ENCODE measurements at regions of chr6 and their contacts with region 1.

Region 1: GRCh38 chr6:160766989-160767660 is 65.1 kb downstream of the PLG start:
- DNase-seq: peak; percentile 9
- H3K4me3 ChIP-seq: no peak overlapping the region
- H3K27ac ChIP-seq: no peak overlapping the region
- H3K4me1 ChIP-seq: no peaks in the 10 kb centered on the region
- H3K27me3 ChIP-seq: no peaks in the 10 kb centered on the region
- CTCF ChIP-seq: peak; percentile 60 to 62
- POLR2A ChIP-seq: no peak

Region 2: DNA sequence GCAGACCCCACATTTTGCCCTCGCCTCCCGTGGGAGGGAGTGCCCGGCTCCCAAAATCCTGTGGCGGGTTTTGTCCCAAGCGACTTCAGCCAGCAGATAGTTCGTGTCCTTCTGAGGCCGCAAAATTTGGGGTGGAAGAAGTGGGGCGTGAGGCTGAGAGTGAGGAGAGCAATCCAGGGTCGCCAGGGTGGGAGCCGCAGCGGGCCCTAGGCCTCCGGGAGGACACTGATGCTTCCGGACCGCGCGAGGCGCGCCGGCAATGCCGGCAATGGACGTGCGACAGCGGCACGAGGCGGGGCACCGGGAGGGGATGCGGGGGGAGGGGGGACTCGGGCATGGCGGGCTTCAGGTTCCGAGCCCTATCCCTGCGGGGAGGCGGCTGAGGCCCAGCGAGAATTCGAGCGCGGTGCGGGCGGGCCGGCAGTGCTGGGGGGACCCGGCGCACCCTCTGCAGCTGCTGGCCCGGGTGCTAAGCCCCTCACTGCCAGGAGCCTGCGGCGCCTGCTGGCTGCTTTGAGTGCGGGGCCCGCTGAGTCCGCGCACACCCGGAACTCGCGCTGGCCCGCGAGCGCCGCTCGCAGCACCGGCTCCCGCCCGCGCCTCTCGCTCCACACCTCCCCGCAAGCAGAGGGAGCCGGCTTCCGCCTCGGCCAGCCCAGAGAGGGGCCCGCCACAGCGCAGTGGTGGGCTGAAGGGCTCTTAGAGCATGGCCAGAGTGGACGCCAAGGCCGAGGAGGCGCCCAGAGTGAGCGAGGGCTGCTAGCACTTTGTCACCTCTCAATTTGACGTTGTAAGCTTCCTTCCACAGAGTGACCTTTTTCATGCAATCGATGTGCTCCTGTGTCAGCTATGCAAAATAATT is 246.9 kb before region 1 on chr6:
- CTCF ChIA-PET with region 1: interaction called, 55 read pairs
- POLR2A ChIA-PET with region 1: no interaction called
- dilution Hi-C with region 1: no loop called
- intact Hi-C with region 1: loop called (anchors 1 kb)
- DNase-seq: peak; percentile 25
- H3K4me3 ChIP-seq: peak overlapping the region; percentile 18 to 55 (median 41)
- H3K27ac ChIP-seq: no peak overlapping the region
- H3K4me1 ChIP-seq: peaks cover 4% of the 10 kb centered on the region
- H3K27me3 ChIP-seq: peaks cover 0 to 8% of the 10 kb centered on the region in 2 experiments
- CTCF ChIP-seq: peak; percentile 80 to 91
- POLR2A ChIP-seq: no peak

Region 3: DNA sequence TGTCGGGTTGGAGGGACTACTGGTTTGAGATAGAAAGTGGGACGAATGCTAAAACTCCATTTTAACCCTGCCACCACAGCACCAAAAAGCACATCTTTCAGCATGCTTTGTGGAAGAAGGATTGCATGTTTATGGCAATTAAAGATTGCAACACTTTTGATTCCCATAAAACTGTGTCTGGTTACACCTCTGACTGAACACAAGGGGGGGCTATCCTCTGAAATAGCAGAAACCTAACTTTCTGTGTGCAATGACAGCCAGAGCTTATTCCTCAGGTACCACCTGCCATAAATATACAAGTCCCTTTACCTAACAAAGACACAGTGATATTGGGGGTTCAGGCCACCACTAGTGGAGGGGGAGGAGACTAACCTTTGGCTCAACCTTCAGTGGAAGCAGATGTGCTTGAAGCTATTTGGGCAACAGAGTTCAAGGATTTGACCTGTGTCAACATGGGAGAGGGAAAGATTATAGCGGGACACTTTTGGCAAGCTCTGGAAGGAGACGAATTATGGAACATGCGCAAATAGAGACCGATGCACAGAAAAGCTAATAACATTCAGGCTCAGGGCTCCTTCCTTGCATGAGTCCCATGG is 74.7 kb before region 1 on chr6:
- CTCF ChIA-PET with region 1: interaction called, 14 read pairs
- POLR2A ChIA-PET with region 1: no interaction called
- dilution Hi-C with region 1: no loop called
- intact Hi-C with region 1: no loop called
- DNase-seq: no peak
- H3K4me3 ChIP-seq: no peak overlapping the region
- H3K27ac ChIP-seq: no peak overlapping the region
- H3K4me1 ChIP-seq: no peaks in the 10 kb centered on the region
- H3K27me3 ChIP-seq: no peaks in the 10 kb centered on the region
- CTCF ChIP-seq: no peak
- POLR2A ChIP-seq: no peak

Region 4: DNA sequence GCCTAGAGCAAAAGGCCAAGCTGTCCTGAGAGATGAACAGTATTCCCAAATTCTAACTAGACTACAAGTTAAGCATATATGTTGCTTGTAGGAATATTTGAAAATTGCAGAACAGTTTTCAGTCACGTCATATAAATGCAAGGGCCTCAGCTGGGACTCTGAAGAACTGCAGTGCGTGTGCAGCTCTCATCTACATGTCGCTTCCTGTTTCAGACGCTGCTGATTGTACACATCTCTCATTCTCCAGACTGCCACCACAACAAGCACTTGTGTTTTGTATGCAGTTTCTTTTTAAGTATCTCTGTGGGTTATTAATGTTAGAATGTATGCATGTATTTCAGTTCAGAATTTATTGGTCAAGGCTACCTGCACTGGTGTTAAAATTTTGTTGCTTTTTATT is 344.1 kb after region 1 on chr6:
- CTCF ChIA-PET with region 1: no interaction called
- POLR2A ChIA-PET with region 1: no interaction called
- dilution Hi-C with region 1: no loop called
- intact Hi-C with region 1: no loop called
- DNase-seq: no peak
- H3K4me3 ChIP-seq: no peak overlapping the region
- H3K27ac ChIP-seq: no peak overlapping the region
- H3K4me1 ChIP-seq: no peaks in the 10 kb centered on the region
- H3K27me3 ChIP-seq: no peaks in the 10 kb centered on the region
- CTCF ChIP-seq: no peak
- POLR2A ChIP-seq: no peak